CD4-positive, alpha-beta T cell (primary cell): ENCODE measurements at regions of chr17 and their contacts with region 1.

Region 1: GRCh38 chr17:3845621-3846441 is at the start of gene NCBP3:
- DNase-seq: peak; percentile 79 to 97 (median 90)
- ATAC-seq: peak; percentile 90
- H3K4me3 ChIP-seq: peak within 1 kb of the TSS; percentile 100
- H3K4me3 Mint-ChIP-seq: peak within 1 kb of the TSS; percentile 95
- H3K27ac ChIP-seq: peak within 1 kb of the TSS; percentile 70 to 77
- H3K27ac Mint-ChIP-seq: peak within 1 kb of the TSS; percentile 82
- H3K4me1 ChIP-seq: peaks cover 30% of the 10 kb centered on the region
- H3K4me1 Mint-ChIP-seq: peaks cover 28% of the 10 kb centered on the region
- H3K27me3 ChIP-seq: no peaks in the 10 kb centered on the region
- H3K27me3 Mint-ChIP-seq: no peaks in the 10 kb centered on the region
- CTCF ChIP-seq: peak; percentile 82
- total RNA-seq, gene NCBP3: 25.0 to 29.5 TPM

Region 2: GRCh38 chr17:3636154-3636907 is 209.5 kb before region 1 on chr17 and contains the starts of genes CTNS and SHPK:
- CTCF ChIA-PET with region 1: interaction called, 6 read pairs
- POLR2A ChIA-PET with region 1: interaction called, 16 read pairs
- intact Hi-C with region 1: loop called in 1 of 2 experiments (anchors 2 kb)
- DNase-seq: peak; percentile 86 to 96 (median 92)
- ATAC-seq: peak; percentile 98
- H3K4me3 ChIP-seq: peak within 1 kb of the TSS; percentile 80
- H3K4me3 Mint-ChIP-seq: peak within 1 kb of the TSS; percentile 98
- H3K27ac ChIP-seq: peak within 1 kb of the TSS; percentile 93 to 99
- H3K27ac Mint-ChIP-seq: peak within 1 kb of the TSS; percentile 99
- H3K4me1 ChIP-seq: peaks cover 27% of the 10 kb centered on the region
- H3K4me1 Mint-ChIP-seq: peaks cover 21% of the 10 kb centered on the region
- H3K27me3 ChIP-seq: no peaks in the 10 kb centered on the region
- H3K27me3 Mint-ChIP-seq: no peaks in the 10 kb centered on the region
- CTCF ChIP-seq: no peak
- total RNA-seq, gene CTNS: 3.3 to 4.9 TPM
- total RNA-seq, gene SHPK: 3.4 TPM

Region 3: GRCh38 chr17:3738562-3739295 is 107.1 kb before region 1 on chr17:
- CTCF ChIA-PET with region 1: interaction called, 52 read pairs
- POLR2A ChIA-PET with region 1: interaction called, 17 read pairs
- intact Hi-C with region 1: loop called in 1 of 2 experiments (anchors 5 kb)
- DNase-seq: peak; percentile 43 to 80 (median 61)
- ATAC-seq: peak; percentile 89
- H3K4me3 ChIP-seq: no peak overlapping the region
- H3K4me3 Mint-ChIP-seq: peak overlapping the region; percentile 27
- H3K27ac ChIP-seq: no peak overlapping the region
- H3K27ac Mint-ChIP-seq: peak overlapping the region; percentile 54
- H3K4me1 ChIP-seq: peaks cover 43% of the 10 kb centered on the region
- H3K4me1 Mint-ChIP-seq: peaks cover 44% of the 10 kb centered on the region
- H3K27me3 ChIP-seq: no peaks in the 10 kb centered on the region
- H3K27me3 Mint-ChIP-seq: no peaks in the 10 kb centered on the region
- CTCF ChIP-seq: no peak

Region 4: GRCh38 chr17:3870871-3871306 is 25.1 kb after region 1 on chr17:
- CTCF ChIA-PET with region 1: no interaction called
- POLR2A ChIA-PET with region 1: no interaction called
- intact Hi-C with region 1: no loop called
- DNase-seq: peak in 2 of 14 experiments; percentile 21 to 28
- ATAC-seq: peak; percentile 83
- H3K4me3 ChIP-seq: no peak overlapping the region
- H3K4me3 Mint-ChIP-seq: peak overlapping the region; percentile 74
- H3K27ac ChIP-seq: no peak overlapping the region
- H3K27ac Mint-ChIP-seq: peak overlapping the region; percentile 88
- H3K4me1 ChIP-seq: no peaks in the 10 kb centered on the region
- H3K4me1 Mint-ChIP-seq: peaks cover 7% of the 10 kb centered on the region
- H3K27me3 ChIP-seq: no peaks in the 10 kb centered on the region
- H3K27me3 Mint-ChIP-seq: no peaks in the 10 kb centered on the region
- CTCF ChIP-seq: no peak

Region 5: DNA sequence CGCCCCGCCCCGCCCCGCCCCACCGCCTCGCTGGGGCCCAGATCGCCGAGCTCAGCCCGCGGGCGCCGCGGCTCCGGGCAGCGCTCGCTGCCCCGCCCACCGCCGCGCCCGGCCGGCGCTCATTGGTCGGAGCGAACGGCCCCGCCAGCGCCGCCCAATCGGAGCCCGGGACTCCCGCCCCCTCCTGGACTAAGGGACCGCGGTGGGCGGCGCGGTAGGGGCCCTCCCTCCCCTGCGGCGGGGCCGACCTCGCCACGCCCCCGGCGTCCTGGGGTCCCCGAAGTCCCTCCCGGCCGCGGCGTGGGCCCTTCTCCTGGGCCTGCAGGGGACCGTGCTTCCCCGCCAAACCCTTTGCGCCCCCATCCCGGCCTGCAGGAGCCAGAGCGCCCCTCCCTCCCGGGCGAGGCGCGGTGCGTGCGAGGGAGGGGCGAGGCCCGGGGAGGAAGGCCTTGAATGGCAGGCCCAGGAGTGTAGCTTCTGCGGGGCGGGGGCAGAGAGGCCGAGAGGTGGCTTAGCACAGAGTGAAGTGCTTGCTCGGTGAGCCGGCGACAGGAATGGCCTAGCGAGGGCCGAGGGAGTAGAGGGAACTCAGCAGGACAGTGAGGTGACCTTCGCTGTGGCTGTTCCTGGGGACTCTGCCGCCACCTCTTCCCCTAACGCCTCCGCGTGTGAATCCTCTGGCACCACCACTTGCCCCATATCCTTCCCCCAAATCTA is 47.3 kb after region 1 on chr17 and contains the start of gene CAMKK1:
- CTCF ChIA-PET with region 1: interaction called, 4 read pairs
- POLR2A ChIA-PET with region 1: interaction called, 5 read pairs
- intact Hi-C with region 1: loop called in 1 of 2 experiments (anchors 1 kb)
- DNase-seq: peak; percentile 70 to 94 (median 86)
- ATAC-seq: peak; percentile 66
- H3K4me3 ChIP-seq: peak within 1 kb of the TSS; percentile 58
- H3K4me3 Mint-ChIP-seq: peak within 1 kb of the TSS; percentile 91
- H3K27ac ChIP-seq: peak within 1 kb of the TSS; percentile 15 to 46
- H3K27ac Mint-ChIP-seq: peak within 1 kb of the TSS; percentile 94
- H3K4me1 ChIP-seq: peaks cover 34% of the 10 kb centered on the region
- H3K4me1 Mint-ChIP-seq: peaks cover 37% of the 10 kb centered on the region
- H3K27me3 ChIP-seq: no peaks in the 10 kb centered on the region
- H3K27me3 Mint-ChIP-seq: no peaks in the 10 kb centered on the region
- CTCF ChIP-seq: no peak
- total RNA-seq, gene CAMKK1: 4.8 to 4.9 TPM

Region 6: GRCh38 chr17:4074831-4075495 is 229.1 kb after region 1 on chr17:
- CTCF ChIA-PET with region 1: interaction called, 4 read pairs
- POLR2A ChIA-PET with region 1: no interaction called
- intact Hi-C with region 1: loop called in 1 of 2 experiments (anchors 10 kb)
- DNase-seq: peak in 4 of 14 experiments; percentile 20 to 75 (median 67)
- ATAC-seq: peak; percentile 85
- H3K4me3 ChIP-seq: no peak overlapping the region
- H3K4me3 Mint-ChIP-seq: no peak overlapping the region
- H3K27ac ChIP-seq: no peak overlapping the region
- H3K27ac Mint-ChIP-seq: no peak overlapping the region
- H3K4me1 ChIP-seq: no peaks in the 10 kb centered on the region
- H3K4me1 Mint-ChIP-seq: no peaks in the 10 kb centered on the region
- H3K27me3 ChIP-seq: no peaks in the 10 kb centered on the region
- H3K27me3 Mint-ChIP-seq: no peaks in the 10 kb centered on the region
- CTCF ChIP-seq: peak; percentile 67

Region 7: DNA sequence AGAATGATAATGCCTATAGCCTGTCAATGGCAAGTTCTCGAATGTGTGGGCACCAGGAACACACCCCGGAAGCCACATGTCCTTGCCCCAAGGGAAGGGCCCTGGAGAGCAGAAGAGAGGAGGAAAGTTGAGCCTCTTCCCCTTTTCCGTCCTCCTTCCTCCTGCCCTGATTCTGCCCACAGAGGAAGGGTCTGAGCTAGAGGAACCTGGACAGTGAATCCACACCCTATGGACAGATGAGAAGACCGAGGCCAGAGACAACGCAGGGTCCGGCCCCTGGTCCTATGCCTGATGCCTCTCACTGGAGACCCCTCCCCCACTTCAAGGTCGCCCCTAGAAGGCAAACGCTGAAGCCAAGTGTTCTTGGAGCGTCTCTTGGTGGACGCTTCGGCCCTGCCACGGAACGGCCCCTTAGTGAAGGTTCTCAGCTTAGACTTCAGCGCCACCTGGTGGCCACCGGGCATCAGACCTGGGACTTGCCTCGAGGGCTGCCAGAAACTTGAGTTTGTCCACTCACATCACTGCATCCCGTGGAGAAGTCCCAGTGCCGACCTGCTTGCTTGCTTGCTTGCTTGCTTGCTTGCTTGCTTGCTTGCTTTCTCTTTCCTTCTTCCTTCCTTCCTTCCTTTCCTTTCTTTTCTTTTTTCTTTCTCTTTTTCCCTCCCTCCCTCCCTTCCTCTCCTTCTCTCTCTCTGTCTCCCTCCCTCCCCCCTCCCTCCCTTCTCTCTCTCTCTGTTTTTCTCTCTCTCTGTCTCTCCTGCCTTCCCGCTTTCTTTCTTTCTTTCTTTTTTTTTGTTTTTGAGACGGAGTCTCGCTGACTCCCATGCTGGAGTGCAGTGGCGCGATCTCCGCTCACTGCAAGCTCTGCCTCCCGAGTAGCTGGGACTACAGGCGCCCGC is 567.4 kb after region 1 on chr17:
- CTCF ChIA-PET with region 1: no interaction called
- POLR2A ChIA-PET with region 1: no interaction called
- intact Hi-C with region 1: loop called in 1 of 2 experiments (anchors 10 kb)
- DNase-seq: peak; percentile 82 to 96 (median 92)
- ATAC-seq: peak; percentile 95
- H3K4me3 ChIP-seq: peak overlapping the region; percentile 36
- H3K4me3 Mint-ChIP-seq: peak overlapping the region; percentile 71
- H3K27ac ChIP-seq: no peak overlapping the region
- H3K27ac Mint-ChIP-seq: no peak overlapping the region
- H3K4me1 ChIP-seq: peaks cover 7% of the 10 kb centered on the region
- H3K4me1 Mint-ChIP-seq: peaks cover 5% of the 10 kb centered on the region
- H3K27me3 ChIP-seq: no peaks in the 10 kb centered on the region
- H3K27me3 Mint-ChIP-seq: no peaks in the 10 kb centered on the region
- CTCF ChIP-seq: peak; percentile 73